BJ (cell line): ENCODE measurements at regions of chr2 and their contacts with region 1.

Region 1: DNA sequence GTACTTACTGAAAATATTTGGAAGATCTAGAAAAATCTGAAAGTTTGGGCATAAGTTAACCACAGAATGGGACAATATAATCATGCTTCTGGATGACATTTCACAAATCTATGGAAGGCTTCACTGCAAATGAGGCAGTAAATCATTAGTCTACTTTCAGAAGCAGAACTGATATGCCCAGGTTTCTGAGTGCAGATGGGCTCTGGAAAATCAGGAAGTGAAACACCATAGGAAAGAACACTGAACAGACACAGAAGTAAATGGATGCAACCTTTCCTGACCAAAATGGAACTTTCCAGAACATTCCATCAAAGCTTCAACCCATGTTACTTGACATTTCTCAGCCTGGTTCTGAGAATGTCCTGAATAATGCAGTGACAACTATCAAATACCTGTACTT is 55.1 kb downstream of the KCNG3 start:
- DNase-seq: no peak
- H3K4me3 ChIP-seq: no peak overlapping the region
- H3K27me3 ChIP-seq: no peaks in the 10 kb centered on the region
- CTCF ChIP-seq: no peak

Region 2: GRCh38 chr2:42298996-42299754 is 139.5 kb before region 1 on chr2:
- CTCF ChIA-PET with region 1: no interaction called
- POLR2A ChIA-PET with region 1: interaction called, 20 read pairs
- DNase-seq: no peak
- H3K4me3 ChIP-seq: no peak overlapping the region
- H3K27me3 ChIP-seq: no peaks in the 10 kb centered on the region
- CTCF ChIP-seq: no peak

Region 3: GRCh38 chr2:42424033-42424432 is 14.7 kb before region 1 on chr2:
- CTCF ChIA-PET with region 1: no interaction called
- POLR2A ChIA-PET with region 1: no interaction called
- DNase-seq: no peak
- H3K4me3 ChIP-seq: no peak overlapping the region
- H3K27me3 ChIP-seq: peaks cover 5% of the 10 kb centered on the region
- CTCF ChIP-seq: no peak

Region 4: DNA sequence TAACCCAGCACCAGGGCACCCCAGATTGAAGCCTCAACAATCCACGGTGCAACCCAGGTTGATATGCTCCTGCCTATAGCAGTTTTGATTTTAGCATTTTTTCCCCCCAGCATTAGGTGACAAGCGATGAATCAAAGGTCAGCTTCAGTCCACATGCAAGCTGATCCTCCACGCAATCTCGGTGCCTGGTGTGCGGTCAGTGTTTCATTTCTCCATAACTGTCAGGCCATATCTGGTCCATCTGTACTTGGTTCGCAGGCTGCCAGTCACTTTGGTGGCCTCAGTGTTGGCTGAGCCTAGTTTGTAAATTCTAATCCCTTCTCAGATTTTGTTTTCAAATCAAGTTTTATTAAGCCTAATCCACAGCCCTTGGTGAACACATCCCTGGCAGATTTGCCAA is 24.9 kb after region 1 on chr2:
- CTCF ChIA-PET with region 1: no interaction called
- POLR2A ChIA-PET with region 1: no interaction called
- DNase-seq: no peak
- H3K4me3 ChIP-seq: no peak overlapping the region
- H3K27me3 ChIP-seq: peaks cover 7% of the 10 kb centered on the region
- CTCF ChIP-seq: no peak